ENCODE measurements at regions of chr11 and their contacts with region 1.

Region 1: GRCh38 chr11:34174412-34175041 is 69.1 kb downstream of the NAT10 start:
- DNase-seq: peak; percentile 61
- H3K4me3 ChIP-seq: peak overlapping the region; percentile 28 to 34 (median 29)
- H3K27ac ChIP-seq: no peak overlapping the region
- H3K4me1 ChIP-seq: peaks cover 12% of the 10 kb centered on the region
- H3K27me3 ChIP-seq: no peaks in the 10 kb centered on the region
- CTCF ChIP-seq: peak; percentile 85 to 99

Region 2: DNA sequence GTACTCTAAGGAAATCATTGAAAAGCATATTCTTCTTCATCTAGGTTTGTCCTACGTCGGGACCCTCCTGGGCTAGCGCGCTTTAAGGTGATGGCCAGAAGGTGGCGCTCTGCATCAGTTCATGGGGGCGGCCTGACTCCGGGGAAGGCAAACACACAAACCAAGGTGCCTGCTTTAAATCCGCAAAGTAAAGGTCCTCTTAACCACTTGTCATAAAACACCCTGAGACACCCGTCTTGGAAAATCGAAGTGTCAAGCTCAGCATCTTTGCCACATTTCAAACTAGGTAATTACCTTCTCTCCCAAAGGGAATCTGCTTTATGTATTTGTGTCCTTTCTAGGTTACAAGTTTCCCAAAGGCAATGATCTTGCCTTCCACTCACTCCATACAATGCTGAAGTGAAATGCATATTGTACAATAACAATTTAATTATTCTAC is 316.6 kb before region 1 on chr11:
- CTCF ChIA-PET with region 1: no interaction called
- dilution Hi-C with region 1: no loop called
- in situ Hi-C with region 1: no loop called
- intact Hi-C with region 1: loop called (anchors 10 kb)
- DNase-seq: peak; percentile 35
- H3K4me3 ChIP-seq: no peak overlapping the region
- H3K27ac ChIP-seq: no peak overlapping the region
- H3K4me1 ChIP-seq: no peaks in the 10 kb centered on the region
- H3K27me3 ChIP-seq: no peaks in the 10 kb centered on the region
- CTCF ChIP-seq: peak; percentile 69 to 97

Region 3: GRCh38 chr11:34013898-34014571 is 160.5 kb before region 1 on chr11:
- CTCF ChIA-PET with region 1: no interaction called
- dilution Hi-C with region 1: no loop called
- in situ Hi-C with region 1: no loop called
- intact Hi-C with region 1: no loop called
- DNase-seq: no peak
- H3K4me3 ChIP-seq: no peak overlapping the region
- H3K27ac ChIP-seq: no peak overlapping the region
- H3K4me1 ChIP-seq: no peaks in the 10 kb centered on the region
- H3K27me3 ChIP-seq: no peaks in the 10 kb centered on the region
- CTCF ChIP-seq: no peak

Region 4: GRCh38 chr11:34214961-34215805 is 40.7 kb after region 1 on chr11:
- CTCF ChIA-PET with region 1: no interaction called
- dilution Hi-C with region 1: no loop called
- in situ Hi-C with region 1: no loop called
- intact Hi-C with region 1: no loop called
- DNase-seq: peak; percentile 97
- H3K4me3 ChIP-seq: no peak overlapping the region
- H3K27ac ChIP-seq: peak overlapping the region; percentile 50
- H3K4me1 ChIP-seq: peaks cover 12% of the 10 kb centered on the region
- H3K27me3 ChIP-seq: no peaks in the 10 kb centered on the region
- CTCF ChIP-seq: no peak

Region 5: DNA sequence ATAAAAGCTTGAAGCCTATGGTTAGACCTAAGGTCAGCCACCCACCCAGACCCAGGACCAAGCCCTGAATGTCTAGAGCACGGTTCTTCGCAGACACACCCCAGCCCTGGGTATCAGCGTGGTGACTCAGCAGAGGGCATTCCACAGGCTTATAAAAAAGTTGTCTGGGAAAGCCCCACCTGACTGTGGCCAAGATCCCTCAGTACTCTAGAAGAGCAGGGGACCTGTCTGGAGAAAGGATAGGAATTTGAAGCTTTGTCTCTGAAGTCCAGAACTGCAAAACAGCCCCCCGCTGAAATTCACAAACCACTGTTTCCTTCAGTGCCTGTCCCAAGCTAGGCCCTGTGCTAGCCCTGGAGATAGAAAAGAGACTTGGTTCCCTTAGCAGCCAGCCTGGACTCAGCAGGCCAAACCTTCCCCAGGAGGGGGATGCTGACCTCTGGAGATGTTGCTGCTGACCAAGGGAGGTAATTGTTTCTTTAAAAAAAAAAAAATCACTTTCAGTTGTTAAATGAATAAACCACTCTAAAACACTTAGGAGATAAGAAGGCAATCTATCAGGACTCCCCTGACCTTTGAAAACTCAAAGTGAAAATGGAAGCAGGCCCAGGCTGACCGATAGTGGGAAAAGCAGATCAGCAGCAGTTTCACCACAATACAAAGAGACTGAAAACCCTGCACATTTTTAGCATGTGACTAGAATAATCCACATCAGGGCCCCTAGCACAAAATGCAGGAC is 69.4 kb after region 1 on chr11:
- CTCF ChIA-PET with region 1: interaction called, 3 read pairs
- dilution Hi-C with region 1: no loop called
- in situ Hi-C with region 1: no loop called
- intact Hi-C with region 1: loop called (anchors 5 kb)
- DNase-seq: peak; percentile 92
- H3K4me3 ChIP-seq: no peak overlapping the region
- H3K27ac ChIP-seq: peak overlapping the region; percentile 47
- H3K4me1 ChIP-seq: peaks cover 29% of the 10 kb centered on the region
- H3K27me3 ChIP-seq: no peaks in the 10 kb centered on the region
- CTCF ChIP-seq: no peak

Region 6: GRCh38 chr11:34274723-34275401 is 100.3 kb after region 1 on chr11:
- CTCF ChIA-PET with region 1: no interaction called
- dilution Hi-C with region 1: no loop called
- in situ Hi-C with region 1: no loop called
- intact Hi-C with region 1: loop called (anchors 1 kb)
- DNase-seq: peak; percentile 99
- H3K4me3 ChIP-seq: no peak overlapping the region
- H3K27ac ChIP-seq: peak overlapping the region; percentile 45
- H3K4me1 ChIP-seq: peaks cover 18% of the 10 kb centered on the region
- H3K27me3 ChIP-seq: no peaks in the 10 kb centered on the region
- CTCF ChIP-seq: no peak

Region 7: DNA sequence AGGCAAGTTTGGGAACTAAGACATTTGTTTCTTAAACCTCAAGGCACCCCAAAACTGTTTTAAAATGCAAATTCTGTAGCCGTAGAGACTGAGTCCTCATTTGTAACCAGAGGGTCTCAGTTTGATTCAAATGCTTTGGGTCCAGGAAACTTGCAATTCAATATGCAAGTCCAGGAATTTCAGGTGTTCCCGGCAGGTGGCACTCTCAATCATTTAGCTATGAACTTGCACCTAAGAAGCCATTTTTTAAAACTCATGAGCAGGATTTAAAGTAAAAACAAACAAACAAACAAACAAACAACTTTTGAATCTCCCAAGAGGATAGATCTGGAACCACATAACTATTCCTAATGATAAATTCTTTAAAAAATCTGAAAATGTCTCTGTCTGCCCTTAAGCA is 192.0 kb after region 1 on chr11:
- CTCF ChIA-PET with region 1: interaction called, 9 read pairs
- dilution Hi-C with region 1: no loop called
- in situ Hi-C with region 1: loop called in 1 of 2 experiments (anchors 5 kb)
- intact Hi-C with region 1: no loop called
- DNase-seq: no peak
- H3K4me3 ChIP-seq: no peak overlapping the region
- H3K27ac ChIP-seq: no peak overlapping the region
- H3K4me1 ChIP-seq: peaks cover 5% of the 10 kb centered on the region
- H3K27me3 ChIP-seq: no peaks in the 10 kb centered on the region
- CTCF ChIP-seq: peak; percentile 53 to 69

Region 8: DNA sequence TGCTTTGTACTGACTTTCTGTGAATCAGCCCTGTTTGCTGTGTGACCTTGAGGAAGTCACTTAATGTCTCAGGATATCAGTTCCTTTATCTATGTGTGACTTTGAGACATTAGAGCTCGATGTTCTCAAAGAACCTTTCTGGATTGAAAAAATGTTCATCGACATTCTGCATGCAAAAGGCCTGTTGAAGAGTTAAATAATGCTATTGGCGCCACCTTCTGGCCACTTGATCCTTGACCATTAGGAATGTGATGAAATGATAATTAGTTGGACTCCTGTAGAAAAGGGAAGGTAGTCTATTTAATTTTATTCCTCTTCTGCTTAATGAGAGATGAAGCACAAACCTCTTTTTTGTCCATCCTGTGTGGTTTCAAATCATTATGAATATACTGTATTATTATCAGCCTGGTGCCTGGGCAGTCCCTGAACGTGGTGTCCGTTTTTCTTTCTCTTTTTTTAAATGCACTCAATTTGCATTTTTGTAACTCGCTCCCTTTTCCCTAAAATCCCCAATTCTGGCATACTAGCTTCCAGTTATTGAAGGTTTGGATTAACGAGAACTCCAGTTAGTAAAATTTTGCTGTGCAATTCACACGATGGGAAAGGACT is 318.4 kb after region 1 on chr11:
- CTCF ChIA-PET with region 1: no interaction called
- dilution Hi-C with region 1: no loop called
- in situ Hi-C with region 1: loop called (anchors 25 kb)
- intact Hi-C with region 1: loop called (anchors 2 kb)
- DNase-seq: peak; percentile 47
- H3K4me3 ChIP-seq: no peak overlapping the region
- H3K27ac ChIP-seq: no peak overlapping the region
- H3K4me1 ChIP-seq: no peaks in the 10 kb centered on the region
- H3K27me3 ChIP-seq: no peaks in the 10 kb centered on the region
- CTCF ChIP-seq: peak; percentile 63 to 71

Measured in mammary epithelial cell (primary cell).